ENCODE measurements at regions of chr18 and their contacts with region 1.

Region 1: GRCh38 chr18:2906704-2907549 is 60.1 kb downstream of the EMILIN2 start:
- DNase-seq: peak; percentile 69
- ATAC-seq: peak; percentile 68
- H3K4me3 ChIP-seq: peak overlapping the region in 4 of 5 experiments; percentile 48 to 77 (median 68)
- H3K4me3 Mint-ChIP-seq: peak overlapping the region; percentile 80
- H3K27ac ChIP-seq: peak overlapping the region; percentile 0 to 44
- H3K27ac Mint-ChIP-seq: peak overlapping the region; percentile 10
- H3K4me1 ChIP-seq: peaks cover 4 to 17% of the 10 kb centered on the region in 2 donors
- H3K4me1 Mint-ChIP-seq: peaks cover 16% of the 10 kb centered on the region
- H3K27me3 ChIP-seq: peaks cover 0 to 5% (median 2%) of the 10 kb centered on the region in 4 experiments
- H3K27me3 Mint-ChIP-seq: no peaks in the 10 kb centered on the region
- CTCF ChIP-seq: peak; percentile 56

Region 2: GRCh38 chr18:2494921-2495320 is 412.0 kb before region 1 on chr18:
- CTCF ChIA-PET with region 1: no interaction called
- POLR2A ChIA-PET with region 1: no interaction called
- intact Hi-C with region 1: no loop called
- DNase-seq: no peak
- ATAC-seq: no peak
- H3K4me3 ChIP-seq: no peak overlapping the region
- H3K4me3 Mint-ChIP-seq: no peak overlapping the region
- H3K27ac ChIP-seq: no peak overlapping the region
- H3K27ac Mint-ChIP-seq: no peak overlapping the region
- H3K4me1 ChIP-seq: no peaks in the 10 kb centered on the region
- H3K4me1 Mint-ChIP-seq: no peaks in the 10 kb centered on the region
- H3K27me3 ChIP-seq: no peaks in the 10 kb centered on the region
- H3K27me3 Mint-ChIP-seq: peaks cover 19% of the 10 kb centered on the region
- CTCF ChIP-seq: no peak

Region 3: DNA sequence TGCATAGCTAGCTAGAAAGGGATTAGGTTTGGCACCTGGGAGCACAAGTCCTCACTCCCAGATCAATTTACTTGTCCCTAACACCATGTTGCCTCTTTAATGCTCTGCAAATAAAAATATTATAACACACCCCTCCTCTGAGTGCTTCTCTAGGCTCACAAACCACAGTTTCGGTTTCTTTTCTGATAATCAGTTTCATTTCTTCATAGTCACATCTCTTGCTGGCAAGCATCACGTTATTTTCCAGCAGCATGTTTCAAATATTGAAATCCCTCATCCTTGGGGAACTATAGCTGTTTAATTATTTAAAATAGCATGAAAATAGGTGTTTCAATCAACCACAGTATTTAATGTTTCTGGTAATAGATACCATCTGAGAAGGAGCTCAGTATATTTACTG is 265.3 kb before region 1 on chr18:
- CTCF ChIA-PET with region 1: no interaction called
- POLR2A ChIA-PET with region 1: interaction called, 13 read pairs
- intact Hi-C with region 1: no loop called
- DNase-seq: peak; percentile 79
- ATAC-seq: peak; percentile 28
- H3K4me3 ChIP-seq: peak overlapping the region in 3 of 5 experiments; percentile 11 to 58 (median 17)
- H3K4me3 Mint-ChIP-seq: peak overlapping the region; percentile 89
- H3K27ac ChIP-seq: peak overlapping the region; percentile 74 to 78
- H3K27ac Mint-ChIP-seq: peak overlapping the region; percentile 89
- H3K4me1 ChIP-seq: peaks cover 61 to 62% of the 10 kb centered on the region in 2 donors
- H3K4me1 Mint-ChIP-seq: peaks cover 47% of the 10 kb centered on the region
- H3K27me3 ChIP-seq: no peaks in the 10 kb centered on the region
- H3K27me3 Mint-ChIP-seq: no peaks in the 10 kb centered on the region
- CTCF ChIP-seq: no peak

Region 4: GRCh38 chr18:2805970-2806943 is 100.7 kb before region 1 on chr18:
- CTCF ChIA-PET with region 1: no interaction called
- POLR2A ChIA-PET with region 1: no interaction called
- intact Hi-C with region 1: loop called (anchors 10 kb)
- DNase-seq: no peak
- ATAC-seq: no peak
- H3K4me3 ChIP-seq: no peak overlapping the region
- H3K4me3 Mint-ChIP-seq: no peak overlapping the region
- H3K27ac ChIP-seq: no peak overlapping the region
- H3K27ac Mint-ChIP-seq: no peak overlapping the region
- H3K4me1 ChIP-seq: no peaks in the 10 kb centered on the region
- H3K4me1 Mint-ChIP-seq: no peaks in the 10 kb centered on the region
- H3K27me3 ChIP-seq: no peaks in the 10 kb centered on the region
- H3K27me3 Mint-ChIP-seq: no peaks in the 10 kb centered on the region
- CTCF ChIP-seq: no peak

Region 5: DNA sequence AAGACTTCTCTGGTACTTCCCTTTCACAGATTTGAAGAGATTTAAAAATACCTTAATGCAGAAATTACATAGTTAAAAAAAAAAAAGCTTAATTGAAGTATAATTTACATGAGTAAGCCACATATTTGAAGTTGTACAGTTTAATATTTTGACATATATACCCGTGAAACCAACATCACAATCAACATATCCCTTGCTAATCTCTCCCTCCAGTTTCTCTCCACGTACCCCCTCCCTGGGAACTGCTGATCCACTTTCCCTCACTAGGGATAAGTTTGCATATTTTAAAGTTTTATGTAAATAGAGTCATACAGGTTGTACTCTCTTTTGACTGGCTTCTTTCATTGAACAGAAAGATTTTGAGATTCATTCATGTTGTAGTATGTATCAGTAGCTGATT is 37.7 kb before region 1 on chr18:
- CTCF ChIA-PET with region 1: no interaction called
- POLR2A ChIA-PET with region 1: no interaction called
- intact Hi-C with region 1: no loop called
- DNase-seq: no peak
- ATAC-seq: no peak
- H3K4me3 ChIP-seq: no peak overlapping the region
- H3K4me3 Mint-ChIP-seq: no peak overlapping the region
- H3K27ac ChIP-seq: no peak overlapping the region
- H3K27ac Mint-ChIP-seq: no peak overlapping the region
- H3K4me1 ChIP-seq: no peaks in the 10 kb centered on the region
- H3K4me1 Mint-ChIP-seq: peaks cover 2% of the 10 kb centered on the region
- H3K27me3 ChIP-seq: no peaks in the 10 kb centered on the region
- H3K27me3 Mint-ChIP-seq: no peaks in the 10 kb centered on the region
- CTCF ChIP-seq: no peak

Region 6: DNA sequence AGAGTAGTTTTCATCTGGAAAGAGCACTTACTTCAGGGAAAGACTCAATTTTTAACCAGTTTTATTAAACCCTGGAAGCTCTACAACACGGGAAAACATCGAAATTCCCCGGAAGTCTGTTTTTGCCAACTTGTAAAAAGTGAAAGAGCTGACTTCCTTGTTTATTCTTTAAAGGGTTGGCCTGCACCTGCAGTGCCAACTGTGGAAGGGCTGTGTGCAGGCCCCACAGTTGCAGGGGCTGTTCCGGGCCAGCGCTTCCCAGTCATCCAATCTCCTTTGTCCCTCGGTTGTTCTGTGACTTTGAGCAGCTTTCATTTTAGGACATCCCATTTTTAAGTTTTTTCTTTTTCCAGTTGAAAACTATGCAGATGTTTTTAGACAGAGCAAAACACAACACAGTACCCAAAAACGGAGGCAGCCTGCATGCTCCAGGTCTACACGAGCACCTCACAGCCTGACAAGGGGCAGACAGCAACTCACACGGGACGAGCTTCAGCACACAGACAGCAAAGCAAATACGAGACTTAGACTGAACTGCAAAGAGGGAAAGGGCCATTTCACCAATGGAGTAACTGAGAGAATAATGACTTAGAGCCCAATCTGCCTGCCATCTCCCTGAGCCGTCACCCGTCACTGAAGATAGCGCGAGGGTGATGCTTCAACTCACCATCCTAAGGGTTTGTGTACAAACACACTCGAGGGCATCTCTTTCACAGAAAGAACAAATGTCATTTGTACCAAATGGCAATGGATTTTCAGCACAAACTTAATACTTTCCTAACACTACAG is 10.5 kb after region 1 on chr18:
- CTCF ChIA-PET with region 1: interaction called, 11 read pairs
- POLR2A ChIA-PET with region 1: no interaction called
- intact Hi-C with region 1: no loop called
- DNase-seq: peak; percentile 60
- ATAC-seq: peak; percentile 86
- H3K4me3 ChIP-seq: peak overlapping the region in 2 of 5 experiments; percentile 20 to 34
- H3K4me3 Mint-ChIP-seq: peak overlapping the region; percentile 79
- H3K27ac ChIP-seq: peak overlapping the region; percentile 55 to 74
- H3K27ac Mint-ChIP-seq: peak overlapping the region; percentile 92
- H3K4me1 ChIP-seq: peaks cover 21 to 26% of the 10 kb centered on the region in 2 donors
- H3K4me1 Mint-ChIP-seq: peaks cover 38% of the 10 kb centered on the region
- H3K27me3 ChIP-seq: no peaks in the 10 kb centered on the region
- H3K27me3 Mint-ChIP-seq: no peaks in the 10 kb centered on the region
- CTCF ChIP-seq: no peak